ENCODE measurements at regions of chr9 and their contacts with region 1.

Region 1: GRCh38 chr9:120936011-120936763 is 9.6 kb upstream of the TRAF1 start:
- DNase-seq: peak; percentile 96 to 97
- H3K4me3 ChIP-seq: peak overlapping the region in 1 of 2 donors; percentile 24
- H3K27ac ChIP-seq: peak overlapping the region; percentile 94
- H3K4me1 ChIP-seq: peaks cover 6 to 86% (median 66%) of the 10 kb centered on the region in 4 donors
- H3K27me3 ChIP-seq: no peaks in the 10 kb centered on the region
- CTCF ChIP-seq: peak; percentile 91

Region 2: GRCh38 chr9:120875954-120876841 is 60.0 kb before region 1 on chr9:
- intact Hi-C with region 1: loop called (anchors 5 kb)
- DNase-seq: peak; percentile 87 to 95
- H3K4me3 ChIP-seq: peak overlapping the region; percentile 64 to 90
- H3K27ac ChIP-seq: peak overlapping the region; percentile 93 to 99
- H3K4me1 ChIP-seq: peaks cover 0 to 17% (median 6%) of the 10 kb centered on the region in 4 donors
- H3K27me3 ChIP-seq: no peaks in the 10 kb centered on the region
- CTCF ChIP-seq: no peak

Measured in tibial artery (tissue), 4 donors.